ENCODE measurements at regions of chr11 and their contacts with region 1.

Region 1: DNA sequence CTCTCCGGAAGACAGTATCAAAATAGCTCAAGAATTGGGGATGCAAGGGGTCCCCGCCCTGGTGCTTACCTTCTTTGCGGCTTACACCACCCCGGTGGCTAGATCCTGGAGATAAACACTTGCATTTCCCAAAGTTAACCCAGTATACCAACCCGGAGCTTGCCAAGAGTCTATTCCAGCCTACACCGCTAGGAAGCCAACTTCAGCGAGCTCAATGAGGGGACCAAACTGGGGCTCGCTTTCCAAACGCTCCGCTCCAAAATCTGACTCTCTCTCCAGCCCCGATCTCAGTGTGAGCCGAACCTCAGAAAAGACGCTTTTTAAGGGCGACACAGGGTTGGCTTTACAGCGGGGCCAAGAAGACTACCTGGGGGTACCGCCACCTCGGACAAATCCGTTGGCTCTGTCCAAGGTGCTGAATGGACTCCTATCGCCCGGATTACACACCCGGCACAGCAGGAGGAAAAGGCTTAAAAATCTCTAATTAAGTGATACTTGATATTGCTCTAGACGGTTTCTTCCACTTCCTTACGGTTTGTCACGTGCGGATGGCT is 20.1 kb upstream of the BDNF start:
- DNase-seq: no peak
- H3K4me3 ChIP-seq: no peak overlapping the region
- H3K27me3 ChIP-seq: peaks cover 6% of the 10 kb centered on the region
- CTCF ChIP-seq: peak; percentile 39

Region 2: DNA sequence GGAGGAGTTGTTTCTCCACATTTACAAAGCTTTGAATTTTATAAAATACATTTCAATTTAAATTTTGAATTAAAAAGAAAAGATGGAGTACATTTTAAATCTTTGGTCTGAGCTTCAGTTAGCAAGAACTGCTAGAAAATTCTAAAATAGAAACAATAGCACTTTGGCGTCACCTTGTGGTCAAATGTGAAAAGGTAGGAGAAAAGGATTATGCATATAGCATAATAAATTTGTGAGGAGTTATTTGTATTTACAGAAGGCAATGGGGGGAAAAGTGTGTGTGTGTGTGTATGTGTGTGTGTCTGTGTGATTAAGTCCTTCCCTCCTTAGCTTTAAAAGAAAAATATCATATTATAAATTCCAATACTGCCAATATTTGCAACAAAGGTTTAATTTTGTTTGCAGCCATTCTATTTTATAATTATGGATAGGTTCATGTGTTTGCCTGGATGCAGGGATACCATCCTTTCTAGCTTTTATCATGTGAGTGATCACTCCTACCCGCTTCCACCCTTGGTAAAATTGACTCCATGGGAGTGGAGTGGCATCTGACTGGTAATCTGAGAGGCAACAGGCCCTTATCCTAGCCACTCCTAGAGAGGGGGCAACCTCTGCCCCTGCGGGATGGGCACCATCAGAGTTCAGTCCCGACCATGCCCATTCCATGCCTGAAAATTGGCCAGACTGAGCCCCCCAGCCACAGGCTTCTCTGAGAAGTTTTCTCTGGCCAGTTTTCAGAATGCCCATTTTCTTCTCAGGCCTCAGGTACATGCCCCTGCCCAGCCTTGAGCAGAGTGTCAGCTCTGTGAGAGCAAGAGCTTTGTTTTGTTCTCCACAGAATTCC is 234.2 kb before region 1 on chr11:
- CTCF ChIA-PET with region 1: no interaction called
- POLR2A ChIA-PET with region 1: no interaction called
- DNase-seq: no peak
- H3K4me3 ChIP-seq: no peak overlapping the region
- H3K27me3 ChIP-seq: no peaks in the 10 kb centered on the region
- CTCF ChIP-seq: peak; percentile 84

Region 3: DNA sequence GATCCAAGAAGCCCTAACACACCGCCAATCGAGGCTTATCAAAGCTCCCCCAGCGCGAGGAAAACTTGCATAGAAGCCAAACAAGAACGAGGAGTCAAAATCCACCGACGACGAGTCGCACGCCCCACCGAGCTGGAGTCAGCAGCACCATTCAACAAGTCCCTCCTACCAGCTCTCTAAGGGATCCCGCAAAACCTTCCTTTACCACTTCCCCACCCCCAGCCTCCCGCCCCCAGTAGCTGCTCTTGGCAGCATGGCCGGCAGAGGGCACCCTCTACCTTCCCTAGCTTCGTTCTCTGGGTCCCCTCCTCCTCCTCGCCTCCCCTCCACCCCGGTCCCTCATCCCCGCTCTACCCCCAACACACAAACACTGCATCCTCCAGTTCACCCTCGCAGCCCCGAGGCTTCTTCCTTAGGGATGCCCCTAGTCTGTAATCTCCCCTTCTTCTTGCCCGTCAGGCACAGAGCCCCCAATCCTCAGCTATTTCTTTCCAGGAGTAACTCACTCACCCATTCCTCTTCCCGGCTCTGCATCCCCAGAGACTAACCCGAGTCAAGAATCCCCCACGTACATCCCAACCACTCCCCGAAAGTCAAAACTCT is 21.4 kb before region 1 on chr11:
- CTCF ChIA-PET with region 1: interaction called, 75 read pairs
- POLR2A ChIA-PET with region 1: interaction called, 8 read pairs
- DNase-seq: peak; percentile 49
- H3K4me3 ChIP-seq: peak overlapping the region; percentile 96
- H3K27me3 ChIP-seq: no peaks in the 10 kb centered on the region
- CTCF ChIP-seq: peak; percentile 95

Region 4: GRCh38 chr11:27705873-27706820 is 14.2 kb before region 1 on chr11:
- CTCF ChIA-PET with region 1: interaction called, 75 read pairs
- POLR2A ChIA-PET with region 1: interaction called, 6 read pairs
- DNase-seq: no peak
- H3K4me3 ChIP-seq: no peak overlapping the region
- H3K27me3 ChIP-seq: no peaks in the 10 kb centered on the region
- CTCF ChIP-seq: peak; percentile 60

Region 5: GRCh38 chr11:27934830-27935145 is 214.4 kb after region 1 on chr11:
- CTCF ChIA-PET with region 1: interaction called, 4 read pairs
- POLR2A ChIA-PET with region 1: interaction called, 15 read pairs
- DNase-seq: peak; percentile 76
- H3K4me3 ChIP-seq: no peak overlapping the region
- H3K27me3 ChIP-seq: no peaks in the 10 kb centered on the region
- CTCF ChIP-seq: no peak

Region 6: GRCh38 chr11:28153586-28153985 is 433.2 kb after region 1 on chr11:
- CTCF ChIA-PET with region 1: no interaction called
- POLR2A ChIA-PET with region 1: no interaction called
- DNase-seq: peak; percentile 11
- H3K4me3 ChIP-seq: no peak overlapping the region
- H3K27me3 ChIP-seq: no peaks in the 10 kb centered on the region
- CTCF ChIP-seq: no peak

Region 7: GRCh38 chr11:29333993-29334775 is 1613.8 kb after region 1 on chr11:
- CTCF ChIA-PET with region 1: interaction called, 10 read pairs
- POLR2A ChIA-PET with region 1: no interaction called
- DNase-seq: no peak
- H3K4me3 ChIP-seq: no peak overlapping the region
- H3K27me3 ChIP-seq: no peaks in the 10 kb centered on the region
- CTCF ChIP-seq: peak; percentile 44

Measured in BJ (cell line).